ENCODE measurements at regions of chr6 and their contacts with region 1.

Region 1: DNA sequence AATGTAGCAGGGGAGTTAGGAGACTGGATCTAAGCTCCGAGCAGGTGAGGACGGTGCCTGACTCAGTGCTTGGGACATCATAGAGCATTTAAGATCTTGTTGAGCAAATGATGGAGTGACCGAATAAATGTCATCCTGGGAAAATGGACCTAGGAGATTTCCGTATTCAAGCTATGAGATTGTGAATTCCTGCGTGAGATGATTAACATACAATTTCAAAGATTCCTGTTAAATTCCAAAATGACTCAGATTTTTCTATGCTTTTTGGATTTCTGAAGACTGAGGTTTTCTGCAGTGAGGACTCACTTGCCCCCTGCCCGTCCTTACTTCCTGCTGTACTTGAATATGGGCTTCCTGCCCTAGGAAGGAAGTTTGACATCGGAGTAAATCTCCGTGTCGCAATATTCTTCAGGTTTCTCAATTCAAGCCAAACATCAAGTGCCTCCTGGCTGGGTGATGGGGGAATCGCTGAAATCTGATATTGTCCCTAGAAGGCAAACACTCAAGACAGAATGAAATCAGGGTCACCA is 5.2 kb downstream of the SYTL3 start:
- DNase-seq: no peak
- H3K4me3 ChIP-seq: no peak overlapping the region
- H3K27ac ChIP-seq: no peak overlapping the region
- H3K4me1 ChIP-seq: peaks cover 12 to 19% of the 10 kb centered on the region in 2 donors
- H3K27me3 ChIP-seq: no peaks in the 10 kb centered on the region
- CTCF ChIP-seq: no peak
- POLR2A ChIP-seq: no peak

Region 2: GRCh38 chr6:158694913-158695312 is 39.9 kb after region 1 on chr6:
- intact Hi-C with region 1: loop called (anchors 5 kb)
- DNase-seq: no peak
- H3K4me3 ChIP-seq: no peak overlapping the region
- H3K27ac ChIP-seq: peak overlapping the region in 1 of 3 donors; percentile 14
- H3K4me1 ChIP-seq: peaks cover 13 to 18% of the 10 kb centered on the region in 2 donors
- H3K27me3 ChIP-seq: no peaks in the 10 kb centered on the region
- CTCF ChIP-seq: no peak
- POLR2A ChIP-seq: no peak

Region 3: DNA sequence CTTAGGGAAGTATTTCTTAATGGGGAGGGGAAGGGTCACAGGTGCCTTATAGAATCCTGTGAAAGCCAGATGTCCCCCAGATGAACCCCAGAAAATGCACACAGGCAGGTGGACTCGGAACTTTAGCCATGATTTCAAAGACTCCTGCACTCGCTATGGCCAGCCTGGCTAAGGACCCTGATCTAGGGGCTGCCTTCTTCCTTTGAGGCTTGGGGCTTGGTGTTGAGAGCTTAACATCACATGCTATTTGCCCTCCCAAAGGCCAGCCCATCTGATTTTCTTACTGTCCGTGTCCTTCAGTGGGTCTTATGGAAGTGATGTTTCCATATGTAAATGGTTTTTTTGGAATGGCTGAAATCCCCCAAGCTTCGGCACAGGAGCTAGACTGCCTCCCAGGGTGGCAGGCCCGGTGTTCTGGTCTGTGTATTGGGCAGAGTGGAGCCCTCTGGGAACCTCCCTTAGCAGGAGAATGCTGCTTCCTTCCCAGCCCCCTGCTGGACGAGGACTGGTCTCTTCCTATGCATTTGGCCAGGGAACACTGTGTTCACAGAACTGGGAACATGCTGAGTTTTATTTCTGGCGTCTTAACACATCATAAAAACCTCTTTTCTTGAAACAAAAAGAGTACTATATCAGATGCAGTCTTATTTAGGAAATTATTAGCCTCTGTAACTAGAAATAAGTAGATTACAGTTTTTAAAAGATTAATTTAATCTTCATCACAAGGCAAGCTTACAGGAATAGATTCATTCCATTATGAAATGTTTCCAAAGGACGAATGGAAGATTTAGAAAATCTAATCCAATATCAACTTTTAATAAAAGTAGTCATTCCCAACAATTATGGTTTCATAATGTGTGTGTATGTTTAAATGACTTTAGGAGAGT is 51.3 kb after region 1 on chr6:
- intact Hi-C with region 1: no loop called
- DNase-seq: peak; percentile 74 to 77
- H3K4me3 ChIP-seq: no peak overlapping the region
- H3K27ac ChIP-seq: peak overlapping the region; percentile 91 to 94 (median 92)
- H3K4me1 ChIP-seq: peaks cover 67 to 69% of the 10 kb centered on the region in 2 donors
- H3K27me3 ChIP-seq: no peaks in the 10 kb centered on the region
- CTCF ChIP-seq: peak; percentile 13 to 63 (median 45)
- POLR2A ChIP-seq: peak in 1 of 2 donors; percentile 43

Region 4: GRCh38 chr6:158837684-158838625 is 182.9 kb after region 1 on chr6:
- intact Hi-C with region 1: no loop called
- DNase-seq: no peak
- H3K4me3 ChIP-seq: no peak overlapping the region
- H3K27ac ChIP-seq: no peak overlapping the region
- H3K4me1 ChIP-seq: peaks cover 14 to 15% of the 10 kb centered on the region in 2 donors
- H3K27me3 ChIP-seq: no peaks in the 10 kb centered on the region
- CTCF ChIP-seq: no peak
- POLR2A ChIP-seq: no peak

Measured in thyroid gland (tissue), 4 donors.